ENCODE measurements at regions of chr19 and their contacts with region 1.

Region 1: DNA sequence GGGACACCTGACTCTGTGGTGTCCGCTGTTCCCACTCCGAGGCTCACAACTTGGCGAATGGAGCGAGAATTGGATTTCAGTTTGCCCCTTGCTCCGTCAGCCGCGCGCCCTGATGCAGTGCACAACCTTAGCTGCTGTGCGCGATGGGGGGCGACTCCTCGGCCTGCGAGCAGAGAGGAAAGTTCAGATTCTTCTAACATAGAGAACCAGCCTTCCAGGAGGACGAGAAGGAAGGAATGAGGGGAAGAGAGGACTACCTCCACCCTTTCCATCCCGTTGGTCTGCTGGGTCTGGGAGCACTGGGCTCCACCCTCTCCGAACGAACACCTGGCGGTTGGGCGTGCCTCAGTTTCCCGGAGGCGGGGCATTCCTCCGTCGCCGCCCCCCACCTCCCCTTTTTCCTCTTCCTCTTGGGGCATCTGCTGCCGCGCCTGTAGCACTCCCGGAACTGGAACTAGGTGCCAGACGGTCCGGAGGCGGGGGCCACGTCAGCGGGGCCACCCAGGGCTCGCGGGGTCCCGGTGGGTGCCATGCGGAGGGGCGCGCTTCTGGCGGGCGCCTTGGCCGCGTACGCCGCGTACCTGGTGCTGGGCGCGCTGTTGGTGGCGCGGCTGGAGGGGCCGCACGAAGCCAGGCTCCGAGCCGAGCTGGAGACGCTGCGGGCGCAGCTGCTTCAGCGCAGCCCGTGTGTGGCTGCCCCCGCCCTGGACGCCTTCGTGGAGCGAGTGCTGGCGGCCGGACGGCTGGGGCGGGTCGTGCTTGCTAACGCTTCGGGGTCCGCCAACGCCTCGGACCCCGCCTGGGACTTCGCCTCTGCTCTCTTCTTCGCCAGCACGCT is at the start of gene KCNK6:
- DNase-seq: peak; percentile 52 to 82 (median 63)
- ATAC-seq: peak; percentile 22 to 43 (median 24)
- H3K4me3 ChIP-seq: peak within 1 kb of the TSS; percentile 47 to 93 (median 76)
- H3K27ac ChIP-seq: peak within 1 kb of the TSS; percentile 39 to 73 (median 55)
- H3K4me1 ChIP-seq: peaks cover 2 to 7% (median 3%) of the 10 kb centered on the region in 3 donors
- H3K27me3 ChIP-seq: no peaks in the 10 kb centered on the region
- CTCF ChIP-seq: no peak
- total RNA-seq, gene KCNK6: 5.0 to 8.7 (median 6.5) TPM

Region 2: GRCh38 chr19:37893845-37894575 is 425.6 kb before region 1 on chr19:
- intact Hi-C with region 1: loop called in 1 of 3 experiments (anchors 10 kb)
- DNase-seq: no peak
- ATAC-seq: peak in 1 of 4 donors; percentile 14
- H3K4me3 ChIP-seq: no peak overlapping the region
- H3K27ac ChIP-seq: no peak overlapping the region
- H3K4me1 ChIP-seq: no peaks in the 10 kb centered on the region
- H3K27me3 ChIP-seq: no peaks in the 10 kb centered on the region
- CTCF ChIP-seq: no peak

Region 3: DNA sequence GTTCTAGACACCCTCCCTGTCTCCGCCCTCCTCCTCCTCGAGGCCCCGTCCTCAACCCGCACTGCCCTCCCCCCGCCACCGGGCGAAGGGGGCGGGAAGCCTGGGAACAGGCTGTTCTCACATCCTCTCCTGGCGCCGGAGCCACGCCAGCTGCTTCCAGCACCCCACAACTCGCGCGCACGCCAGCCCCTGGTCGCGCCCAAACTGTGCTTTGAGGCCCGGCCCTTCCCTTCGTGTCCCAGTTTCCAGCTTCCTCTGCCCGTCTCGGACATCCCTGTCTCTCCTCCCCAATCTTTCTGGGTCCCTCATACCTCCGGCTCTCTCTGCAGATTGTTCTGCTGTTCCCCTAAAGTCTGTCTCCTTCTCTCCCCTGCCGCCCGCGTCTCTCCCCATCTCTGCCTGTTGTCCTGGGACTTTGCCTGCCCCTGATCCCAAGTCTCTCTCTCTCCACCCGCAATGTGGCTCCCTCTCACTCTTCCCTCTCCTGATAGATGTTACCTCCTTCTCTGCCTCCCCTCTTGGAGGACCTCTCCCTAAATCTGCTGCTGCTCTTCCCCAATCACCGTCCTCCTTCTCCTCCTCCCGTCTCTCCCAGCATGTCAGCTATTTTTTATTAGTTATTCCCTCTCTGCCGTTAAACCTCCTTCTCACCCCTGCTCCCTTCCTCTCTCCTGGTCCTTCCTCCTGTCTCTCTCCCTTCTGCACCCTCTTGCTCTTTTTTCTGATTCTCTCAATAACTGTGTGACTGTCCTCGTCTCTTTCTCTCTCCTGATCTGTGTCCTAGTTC is 109.8 kb before region 1 on chr19:
- intact Hi-C with region 1: no loop called
- DNase-seq: no peak
- ATAC-seq: peak in 3 of 4 donors; percentile 50 to 56 (median 51)
- H3K4me3 ChIP-seq: no peak overlapping the region
- H3K27ac ChIP-seq: no peak overlapping the region
- H3K4me1 ChIP-seq: no peaks in the 10 kb centered on the region
- H3K27me3 ChIP-seq: no peaks in the 10 kb centered on the region
- CTCF ChIP-seq: no peak

Region 4: DNA sequence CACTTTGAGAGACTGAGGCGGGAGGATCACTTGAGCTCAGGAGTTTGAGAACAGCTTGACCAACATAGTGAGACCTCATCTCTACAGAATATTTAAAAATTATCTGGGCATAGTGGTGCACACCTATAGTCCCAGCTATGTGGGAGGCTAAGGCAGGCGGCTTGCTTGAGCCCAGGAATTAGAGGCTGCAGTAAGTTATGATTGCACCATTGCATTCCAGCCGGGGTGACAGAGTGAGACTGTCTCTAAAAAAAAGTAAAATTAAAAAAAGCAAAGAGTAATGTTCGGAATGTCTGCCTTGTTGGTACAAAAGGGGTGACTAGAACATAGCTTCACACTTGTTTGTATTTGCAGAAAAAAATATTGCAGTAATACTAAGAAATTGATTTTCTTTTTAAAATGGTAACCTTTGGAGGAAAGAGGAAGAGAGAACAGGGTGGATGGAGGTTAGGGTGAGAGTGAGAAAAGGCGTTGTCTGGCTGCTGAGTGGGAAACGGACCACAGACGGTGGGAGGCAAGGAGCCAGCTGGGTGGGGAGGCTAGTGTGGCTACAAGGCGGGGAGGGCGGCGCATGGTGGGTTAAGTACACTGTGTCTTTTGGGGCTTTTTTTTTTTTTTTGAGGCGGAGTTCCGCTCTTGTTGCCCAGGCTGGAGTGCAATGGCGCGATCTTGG is 73.7 kb before region 1 on chr19:
- intact Hi-C with region 1: loop called in 2 of 3 experiments (anchors 5 to 10 kb)
- DNase-seq: no peak
- ATAC-seq: no peak
- H3K4me3 ChIP-seq: no peak overlapping the region
- H3K27ac ChIP-seq: no peak overlapping the region
- H3K4me1 ChIP-seq: peaks cover 0 to 5% (median 4%) of the 10 kb centered on the region in 3 donors
- H3K27me3 ChIP-seq: no peaks in the 10 kb centered on the region
- CTCF ChIP-seq: no peak